Activated T-helper 1 cell treated with anti-CD3 and anti-CD28 coated beads, Interleukin-12 subunit alpha, Interleukin-12 subunit beta, Interleukin-2, Interleukin-4 antibody, amounts not matched to agents 30 ng/mL and 10 ng/mL and 1 ng/mL, durations not matched to agents 14 hours and 24 hours and 36 hours (primary cell): ENCODE measurements at regions of chr12 and their contacts with region 1.

Region 1: GRCh38 chr12:32755654-32756475 is at the start of gene YARS2:
- DNase-seq: peak; percentile 87
- H3K4me3 Mint-ChIP-seq: peak within 1 kb of the TSS; percentile 88
- H3K27ac Mint-ChIP-seq: peak within 1 kb of the TSS; percentile 81
- H3K4me1 Mint-ChIP-seq: peaks cover 33% of the 10 kb centered on the region
- H3K27me3 Mint-ChIP-seq: no peaks in the 10 kb centered on the region
- total RNA-seq, gene YARS2: 28.2 and 31.1 TPM in 2 replicates

Region 2: GRCh38 chr12:31325877-31326631 is 1429.8 kb before region 1 on chr12 and contains the start of gene SINHCAF:
- intact Hi-C with region 1: loop called (anchors 1 kb)
- DNase-seq: peak; percentile 98
- H3K4me3 Mint-ChIP-seq: peak within 1 kb of the TSS; percentile 97
- H3K27ac Mint-ChIP-seq: peak within 1 kb of the TSS; percentile 95
- H3K4me1 Mint-ChIP-seq: peaks cover 41% of the 10 kb centered on the region
- H3K27me3 Mint-ChIP-seq: peaks cover 15% of the 10 kb centered on the region
- total RNA-seq, gene SINHCAF: 270 and 276 TPM in 2 replicates

Region 3: DNA sequence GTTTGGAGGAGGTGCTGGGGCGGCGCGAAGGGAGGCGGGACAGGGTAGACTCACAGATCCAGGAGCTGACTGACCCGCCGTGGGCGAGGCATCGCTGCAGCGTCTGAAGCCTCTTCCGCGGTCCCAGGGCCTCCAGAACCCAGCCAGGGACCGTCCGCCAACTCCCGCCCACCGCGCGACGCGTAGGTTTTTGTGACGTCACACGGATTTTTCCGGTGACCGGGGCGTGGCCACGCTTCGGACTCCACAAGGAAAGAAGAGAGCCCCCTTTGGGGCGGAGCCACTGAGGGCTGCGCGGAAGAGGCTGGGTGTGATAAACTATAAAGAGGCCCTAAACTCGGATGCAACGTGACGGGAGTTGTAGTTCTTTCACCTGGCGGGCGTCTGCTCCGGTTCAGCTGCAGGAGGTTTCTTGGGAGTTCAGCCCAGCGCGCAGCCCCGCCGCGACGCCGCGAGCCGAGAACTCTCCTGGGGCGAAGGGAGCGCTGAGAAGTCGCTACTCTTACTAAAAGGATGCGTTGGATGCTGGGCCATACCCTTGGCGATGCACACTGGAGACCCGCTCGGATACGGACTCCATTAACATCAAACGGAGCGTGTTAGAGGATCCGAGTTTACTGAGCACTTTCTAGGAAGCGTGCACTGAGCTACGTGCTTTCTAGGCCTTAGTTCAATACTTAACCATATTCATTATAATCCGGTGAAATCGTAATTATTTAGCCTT is 1026.8 kb before region 1 on chr12 and contains the start of gene AMN1:
- intact Hi-C with region 1: loop called (anchors 5 kb)
- DNase-seq: peak; percentile 100
- H3K4me3 Mint-ChIP-seq: peak within 1 kb of the TSS; percentile 98
- H3K27ac Mint-ChIP-seq: peak within 1 kb of the TSS; percentile 99
- H3K4me1 Mint-ChIP-seq: peaks cover 53% of the 10 kb centered on the region
- H3K27me3 Mint-ChIP-seq: no peaks in the 10 kb centered on the region
- total RNA-seq, gene AMN1: 3.1 and 3.4 TPM in 2 replicates

Region 4: GRCh38 chr12:32365473-32366064 is 390.3 kb before region 1 on chr12:
- intact Hi-C with region 1: loop called (anchors 1 kb)
- DNase-seq: peak; percentile 14
- H3K4me3 Mint-ChIP-seq: no peak overlapping the region
- H3K27ac Mint-ChIP-seq: no peak overlapping the region
- H3K4me1 Mint-ChIP-seq: no peaks in the 10 kb centered on the region
- H3K27me3 Mint-ChIP-seq: no peaks in the 10 kb centered on the region

Region 5: GRCh38 chr12:32679091-32679919 is 76.6 kb before region 1 on chr12 and contains the start of gene DNM1L:
- intact Hi-C with region 1: loop called (anchors 1 kb)
- DNase-seq: peak; percentile 90
- H3K4me3 Mint-ChIP-seq: peak within 1 kb of the TSS; percentile 95
- H3K27ac Mint-ChIP-seq: peak within 1 kb of the TSS; percentile 92
- H3K4me1 Mint-ChIP-seq: peaks cover 35% of the 10 kb centered on the region
- H3K27me3 Mint-ChIP-seq: no peaks in the 10 kb centered on the region
- total RNA-seq, gene DNM1L: 87.0 and 91.9 TPM in 2 replicates

Region 6: GRCh38 chr12:32918890-32919801 is 163.3 kb after region 1 on chr12:
- intact Hi-C with region 1: loop called (anchors 1 kb)
- DNase-seq: no peak
- H3K4me3 Mint-ChIP-seq: no peak overlapping the region
- H3K27ac Mint-ChIP-seq: no peak overlapping the region
- H3K4me1 Mint-ChIP-seq: no peaks in the 10 kb centered on the region
- H3K27me3 Mint-ChIP-seq: no peaks in the 10 kb centered on the region

Region 7: DNA sequence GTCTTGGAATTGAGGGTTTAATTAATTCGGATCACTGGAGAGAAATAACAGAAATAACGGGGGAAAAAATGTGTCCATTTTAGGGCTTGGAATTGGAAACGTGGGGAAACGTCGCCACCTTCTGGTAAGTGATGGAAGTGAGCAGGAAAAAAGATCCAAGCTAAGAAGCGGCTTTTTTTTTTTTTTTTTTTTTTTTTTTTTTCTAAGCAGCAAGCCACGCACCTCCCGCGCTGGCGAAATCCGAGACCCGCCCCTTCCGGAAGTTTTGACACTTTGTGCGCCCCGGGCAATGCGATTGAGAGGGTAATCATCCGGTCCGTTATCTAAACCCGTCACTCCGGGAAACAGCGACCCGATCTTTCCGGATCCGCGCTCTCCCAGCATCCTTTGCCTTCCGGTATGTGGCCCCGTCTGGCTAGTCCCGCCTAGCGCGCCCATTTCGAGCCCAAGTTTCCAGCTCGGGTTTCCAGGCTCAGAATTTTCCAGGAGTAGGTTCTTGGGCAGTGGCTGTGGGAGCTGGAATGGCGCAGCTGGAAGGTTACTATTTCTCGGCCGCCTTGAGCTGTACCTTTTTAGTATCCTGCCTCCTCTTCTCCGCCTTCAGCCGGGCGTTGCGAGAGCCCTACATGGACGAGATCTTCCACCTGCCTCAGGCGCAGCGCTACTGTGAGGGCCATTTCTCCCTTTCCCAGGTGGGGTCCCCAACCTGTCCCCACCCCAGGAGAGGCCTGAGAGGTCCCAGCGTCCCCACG is 1266.4 kb after region 1 on chr12 and contains the start of gene ALG10:
- intact Hi-C with region 1: loop called (anchors 1 kb)
- DNase-seq: peak; percentile 95
- H3K4me3 Mint-ChIP-seq: peak within 1 kb of the TSS; percentile 96
- H3K27ac Mint-ChIP-seq: peak within 1 kb of the TSS; percentile 93
- H3K4me1 Mint-ChIP-seq: peaks cover 35% of the 10 kb centered on the region
- H3K27me3 Mint-ChIP-seq: no peaks in the 10 kb centered on the region
- total RNA-seq, gene ALG10: 20.3 and 28.5 TPM in 2 replicates